HCT116 (cell line): ENCODE measurements at regions of chr2 and their contacts with region 1.

Region 1: DNA sequence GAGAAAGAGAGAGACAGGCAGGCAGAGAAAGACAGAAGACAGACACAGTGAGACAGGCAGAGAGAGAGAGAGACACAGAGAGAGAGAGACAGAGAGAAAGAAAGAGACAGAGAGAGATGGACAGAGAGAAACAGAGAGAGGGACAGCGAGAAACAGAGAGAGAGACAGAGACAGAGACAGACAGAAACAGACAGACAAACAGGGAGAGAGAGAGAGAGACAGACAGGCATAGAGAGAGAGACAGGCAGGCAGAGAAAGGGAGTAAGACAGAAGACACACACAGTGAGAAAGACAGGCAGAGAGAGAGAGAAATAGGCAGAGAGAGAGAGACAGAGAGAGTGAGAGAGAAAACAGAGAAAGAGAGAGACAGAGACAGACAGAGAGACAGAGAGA is 105.3 kb upstream of the ANKRD30BL start:
- DNase-seq: no peak
- ATAC-seq: no peak
- H3K4me3 ChIP-seq: no peak overlapping the region
- H3K27ac ChIP-seq: no peak overlapping the region
- H3K4me1 ChIP-seq: peaks cover 0 to 6% of the 10 kb centered on the region in 2 experiments; a peak in 2 of 4 replicates
- H3K27me3 ChIP-seq: peaks cover 13% of the 10 kb centered on the region
- CTCF ChIP-seq: no peak
- POLR2A ChIP-seq: no peak
- RAD21 ChIP-seq: no peak

Region 2: GRCh38 chr2:132374551-132374950 is 107.5 kb after region 1 on chr2:
- CTCF ChIA-PET with region 1: no interaction called
- POLR2A ChIA-PET with region 1: no interaction called
- RAD21 ChIA-PET with region 1: no interaction called
- intact Hi-C with region 1: no loop called
- DNase-seq: no peak
- ATAC-seq: no peak
- H3K4me3 ChIP-seq: no peak overlapping the region
- H3K27ac ChIP-seq: no peak overlapping the region
- H3K4me1 ChIP-seq: no peaks in the 10 kb centered on the region
- H3K27me3 ChIP-seq: no peaks in the 10 kb centered on the region; the same call in 1 of the 2 replicates
- CTCF ChIP-seq: no peak
- POLR2A ChIP-seq: no peak
- RAD21 ChIP-seq: no peak

Region 3: DNA sequence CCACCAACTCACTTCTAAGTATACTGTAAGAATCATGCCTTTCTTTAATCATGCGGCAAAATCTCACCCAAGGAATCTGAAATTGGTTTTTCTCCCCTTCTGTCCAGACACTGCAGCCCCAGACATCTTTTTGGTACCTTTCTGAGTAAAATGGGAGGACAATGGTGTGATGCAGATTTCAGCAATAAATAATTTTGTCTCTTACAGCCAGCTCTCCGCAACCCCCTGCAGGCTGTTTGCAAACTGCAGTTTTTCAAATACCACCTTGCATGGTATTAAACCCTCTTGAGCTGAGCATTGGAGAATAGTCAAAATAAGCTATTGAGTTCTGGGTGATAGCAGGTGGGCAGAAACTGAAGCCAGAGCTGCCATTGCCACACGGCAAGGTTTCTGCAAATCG is 181.7 kb after region 1 on chr2:
- CTCF ChIA-PET with region 1: no interaction called
- POLR2A ChIA-PET with region 1: no interaction called
- RAD21 ChIA-PET with region 1: no interaction called
- intact Hi-C with region 1: loop called (anchors 5 kb)
- DNase-seq: no peak
- ATAC-seq: peak; percentile 82
- H3K4me3 ChIP-seq: no peak overlapping the region
- H3K27ac ChIP-seq: no peak overlapping the region
- H3K4me1 ChIP-seq: peaks cover 0 to 17% of the 10 kb centered on the region in 2 experiments; a peak in 1 of 4 replicates
- H3K27me3 ChIP-seq: no peaks in the 10 kb centered on the region
- CTCF ChIP-seq: peak; percentile 66 to 83 (median 76); a peak in 5 of 6 replicates
- POLR2A ChIP-seq: no peak
- RAD21 ChIP-seq: peak; percentile 80

Region 4: GRCh38 chr2:132651115-132652045 is 384.3 kb after region 1 on chr2:
- CTCF ChIA-PET with region 1: no interaction called
- POLR2A ChIA-PET with region 1: no interaction called
- RAD21 ChIA-PET with region 1: no interaction called
- intact Hi-C with region 1: loop called (anchors 5 kb)
- DNase-seq: peak; percentile 12
- ATAC-seq: peak; percentile 59
- H3K4me3 ChIP-seq: no peak overlapping the region
- H3K27ac ChIP-seq: no peak overlapping the region
- H3K4me1 ChIP-seq: no peaks in the 10 kb centered on the region
- H3K27me3 ChIP-seq: no peaks in the 10 kb centered on the region
- CTCF ChIP-seq: peak in 2 of 3 experiments; percentile 37 to 41; a peak in 4 of 6 replicates
- POLR2A ChIP-seq: no peak
- RAD21 ChIP-seq: 0 out of 2 replicates have a peak, but pooled peaks have one; percentile 7